ENCODE measurements at regions of chr10 and their contacts with region 1.

Region 1: DNA sequence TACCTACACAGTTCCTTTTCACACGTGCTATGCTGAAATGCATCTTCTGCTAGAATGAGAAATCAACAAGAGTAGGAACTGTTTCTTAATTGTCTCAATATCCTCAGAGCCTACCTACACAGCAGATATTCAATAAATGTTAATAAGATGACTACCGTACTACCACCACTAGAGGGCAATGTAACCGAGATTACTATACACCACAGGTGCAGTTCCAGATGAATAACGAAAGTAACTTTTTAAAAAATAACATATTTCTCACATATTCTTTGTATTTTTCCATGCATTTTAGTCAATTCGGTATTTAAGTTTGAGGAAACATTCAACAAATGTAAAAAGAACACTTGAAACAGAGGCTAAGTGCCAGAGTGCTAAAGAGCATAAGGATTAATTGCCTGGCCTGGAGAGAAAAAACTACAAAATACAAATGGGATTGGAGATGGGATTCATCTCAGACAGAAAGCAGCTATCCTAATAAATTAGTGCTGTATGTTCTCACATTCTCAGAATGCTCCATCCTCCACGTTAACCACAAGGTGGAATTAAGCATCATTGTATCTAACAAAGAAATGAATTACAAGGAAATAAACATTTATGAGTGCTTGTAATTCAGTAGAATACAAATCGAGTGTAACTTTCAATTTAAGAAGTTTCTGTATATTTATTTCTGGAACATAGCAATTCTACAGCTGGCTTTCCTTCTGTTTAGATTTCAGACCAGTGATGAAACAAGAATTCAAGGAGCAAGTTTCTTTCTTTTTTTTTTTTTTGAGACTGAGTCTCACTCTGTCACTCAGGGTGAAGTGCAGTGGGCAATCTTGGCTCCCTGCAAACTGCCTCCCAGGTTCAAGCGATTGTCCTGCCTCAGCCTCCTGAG is 20.3 kb upstream of the HECTD2 start:
- DNase-seq: no peak
- H3K4me3 ChIP-seq: peak overlapping the region in 1 of 4 donors; percentile 16
- H3K27ac ChIP-seq: peak overlapping the region in 2 of 4 donors; percentile 9 to 21
- H3K4me1 ChIP-seq: peaks cover 0 to 9% (median 5%) of the 10 kb centered on the region in 4 donors
- H3K27me3 ChIP-seq: peaks cover 9% of the 10 kb centered on the region
- CTCF ChIP-seq: peak; percentile 66 to 75 (median 69)
- EP300 ChIP-seq: no peak
- POLR2A ChIP-seq: no peak

Region 2: DNA sequence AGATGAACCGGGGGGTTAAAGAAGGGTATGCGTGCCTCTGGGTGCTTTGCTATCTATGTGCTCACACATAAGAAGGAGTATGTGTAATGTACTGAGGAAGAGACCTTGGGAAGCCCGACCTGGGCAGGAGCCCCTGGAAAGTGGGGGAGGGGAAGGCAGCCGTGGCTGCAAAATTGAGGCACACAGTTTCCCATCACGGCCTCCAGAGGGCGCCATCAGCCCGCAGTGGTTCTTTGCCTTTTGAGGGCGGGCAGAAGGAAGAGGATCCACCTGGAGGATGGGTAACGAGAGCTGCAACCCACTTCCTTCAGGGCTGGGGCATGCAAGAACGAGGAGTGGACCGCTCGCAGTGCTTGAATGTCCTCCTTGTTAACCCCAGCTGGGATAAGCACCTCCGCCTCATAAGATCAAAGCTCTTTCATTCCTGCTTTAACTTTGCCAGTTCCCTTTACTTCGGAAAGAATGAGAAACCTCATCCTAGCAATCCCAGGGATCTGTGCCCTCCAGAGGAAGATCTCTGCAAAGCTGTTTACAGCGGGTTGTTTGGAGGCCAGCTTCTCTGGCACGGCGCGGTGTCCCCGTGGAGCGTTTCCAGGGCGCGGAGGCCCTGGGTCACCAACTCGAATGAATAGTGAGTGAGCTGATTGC is 91.5 kb before region 1 on chr10:
- in situ Hi-C with region 1: no loop called
- intact Hi-C with region 1: loop called (anchors 10 kb)
- DNase-seq: peak; percentile 71
- H3K4me3 ChIP-seq: peak overlapping the region in 3 of 4 donors; percentile 21 to 52 (median 26)
- H3K27ac ChIP-seq: no peak overlapping the region
- H3K4me1 ChIP-seq: peaks cover 6 to 11% (median 9%) of the 10 kb centered on the region in 4 donors
- H3K27me3 ChIP-seq: no peaks in the 10 kb centered on the region
- CTCF ChIP-seq: peak; percentile 81 to 92 (median 89)
- EP300 ChIP-seq: no peak
- POLR2A ChIP-seq: no peak

Region 3: GRCh38 chr10:91409869-91410637 is 20.2 kb after region 1 on chr10 and contains the start of gene HECTD2:
- in situ Hi-C with region 1: no loop called
- intact Hi-C with region 1: loop called (anchors 1 kb)
- DNase-seq: peak; percentile 84
- H3K4me3 ChIP-seq: peak within 1 kb of the TSS; percentile 67 to 83 (median 75)
- H3K27ac ChIP-seq: peak within 1 kb of the TSS; percentile 95 to 99 (median 98)
- H3K4me1 ChIP-seq: peaks cover 4 to 37% (median 10%) of the 10 kb centered on the region in 4 donors
- H3K27me3 ChIP-seq: no peaks in the 10 kb centered on the region
- CTCF ChIP-seq: peak in 4 of 5 experiments; percentile 25 to 64 (median 38)
- EP300 ChIP-seq: no peak
- POLR2A ChIP-seq: peak; percentile 50
- total RNA-seq, gene HECTD2: 6.8 to 10.3 (median 8.1) TPM

Region 4: GRCh38 chr10:91908337-91909116 is 518.7 kb after region 1 on chr10:
- in situ Hi-C with region 1: loop called (anchors 25 kb)
- intact Hi-C with region 1: no loop called
- DNase-seq: peak; percentile 77
- H3K4me3 ChIP-seq: peak overlapping the region; percentile 56 to 94 (median 78)
- H3K27ac ChIP-seq: peak overlapping the region; percentile 76 to 84 (median 81)
- H3K4me1 ChIP-seq: peaks cover 0 to 20% (median 3%) of the 10 kb centered on the region in 4 donors
- H3K27me3 ChIP-seq: no peaks in the 10 kb centered on the region
- CTCF ChIP-seq: peak in 4 of 5 experiments; percentile 22 to 35 (median 30)
- EP300 ChIP-seq: no peak
- POLR2A ChIP-seq: no peak

Measured in transverse colon (tissue), 4 donors.